PC-3 (cell line): ENCODE measurements at regions of chr20 and their contacts with region 1.

Region 1: GRCh38 chr20:7926767-7927166 is 13.5 kb downstream of the HAO1 start:
- DNase-seq: peak; percentile 67
- ATAC-seq: no peak; the same call in 1 of the 2 replicates
- H3K4me3 ChIP-seq: no peak overlapping the region
- H3K27ac ChIP-seq: peak overlapping the region; percentile 50
- H3K4me1 ChIP-seq: peaks cover 27% of the 10 kb centered on the region
- H3K27me3 ChIP-seq: no peaks in the 10 kb centered on the region
- CTCF ChIP-seq: peak; percentile 92

Region 2: GRCh38 chr20:6142348-6142993 is 1784.3 kb before region 1 on chr20:
- CTCF ChIA-PET with region 1: no interaction called
- POLR2A ChIA-PET with region 1: no interaction called
- intact Hi-C with region 1: loop called (anchors 5 kb)
- DNase-seq: peak; percentile 89
- ATAC-seq: peak; percentile 91
- H3K4me3 ChIP-seq: peak overlapping the region; percentile 15; the same call in 1 of the 2 replicates
- H3K27ac ChIP-seq: no peak overlapping the region
- H3K4me1 ChIP-seq: no peaks in the 10 kb centered on the region
- H3K27me3 ChIP-seq: peaks cover 31% of the 10 kb centered on the region; the same call in 1 of the 2 replicates
- CTCF ChIP-seq: peak; percentile 93

Region 3: DNA sequence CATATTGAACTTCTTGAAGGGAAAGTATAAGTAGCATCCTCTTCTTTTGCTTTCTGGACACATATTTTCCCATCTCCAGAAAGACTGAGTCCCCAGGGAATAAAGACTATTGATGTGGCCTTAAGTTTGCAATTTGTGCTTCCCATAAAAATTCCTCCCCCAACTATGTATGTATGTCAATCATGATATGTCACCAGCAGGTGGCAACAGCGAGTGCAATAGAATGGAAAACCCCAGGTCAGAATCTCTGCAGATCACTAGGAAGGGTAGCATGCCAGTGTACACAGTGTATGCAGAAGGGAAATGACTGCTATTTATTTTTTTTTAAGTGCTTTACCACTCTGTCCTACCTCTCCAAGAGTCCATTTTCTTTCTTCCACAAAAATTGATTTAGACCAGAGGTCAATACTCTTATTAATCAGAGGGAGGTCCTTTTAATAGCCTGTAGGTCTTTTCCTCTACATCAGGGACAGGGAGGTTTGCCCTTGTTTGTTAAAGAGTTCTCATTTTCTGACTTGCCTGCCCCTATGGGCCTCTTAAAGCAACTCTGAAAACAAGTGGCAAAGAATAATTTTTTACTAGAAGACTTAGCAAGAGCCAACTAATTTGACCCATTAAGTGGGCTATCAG is 1097.9 kb before region 1 on chr20:
- CTCF ChIA-PET with region 1: no interaction called
- POLR2A ChIA-PET with region 1: no interaction called
- intact Hi-C with region 1: loop called (anchors 2 kb)
- DNase-seq: peak; percentile 85
- ATAC-seq: peak; percentile 89
- H3K4me3 ChIP-seq: no peak overlapping the region
- H3K27ac ChIP-seq: no peak overlapping the region
- H3K4me1 ChIP-seq: peaks cover 5% of the 10 kb centered on the region; the same call in 1 of the 2 replicates
- H3K27me3 ChIP-seq: peaks cover 25% of the 10 kb centered on the region
- CTCF ChIP-seq: peak; percentile 83

Region 4: DNA sequence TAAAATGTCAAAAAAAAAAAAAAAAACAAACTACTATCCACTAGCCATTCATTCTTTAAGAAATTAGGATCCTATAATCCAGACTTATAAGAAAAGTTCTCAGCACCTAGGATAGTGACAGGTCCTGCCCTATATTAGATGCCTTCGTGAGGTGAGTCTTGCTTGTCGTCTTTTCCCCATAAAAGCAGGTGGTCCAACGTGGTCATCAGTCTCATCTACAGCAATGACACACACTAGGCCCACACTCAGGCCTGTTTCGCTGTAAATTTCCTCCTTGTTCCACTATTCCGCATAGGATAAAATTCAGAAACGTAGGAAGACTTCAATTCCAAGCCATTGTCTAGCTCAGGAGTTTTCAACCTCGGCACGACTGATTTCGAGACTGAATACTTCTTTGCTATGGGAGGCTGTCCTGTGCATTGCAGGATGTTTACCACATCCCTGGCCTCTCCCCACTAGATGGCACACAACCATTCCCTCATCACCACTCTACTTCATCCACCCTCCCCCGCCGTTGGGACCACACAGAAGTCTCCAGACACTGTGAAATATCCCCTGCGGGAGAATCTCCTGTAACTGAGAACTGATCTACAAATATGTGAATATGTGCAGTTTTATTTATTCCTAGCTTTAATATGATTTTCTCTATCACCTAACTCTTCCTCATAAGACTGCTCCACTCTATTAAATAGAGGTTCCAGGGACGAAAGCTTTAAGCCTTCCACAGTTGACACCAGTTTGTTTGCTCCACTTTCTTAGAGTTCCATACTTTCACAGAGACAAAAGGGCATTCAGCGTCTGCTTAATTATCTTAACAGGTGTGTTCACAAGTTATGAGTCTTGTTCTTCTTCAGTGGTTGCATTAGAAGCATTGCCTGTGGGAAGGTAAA is 812.9 kb before region 1 on chr20:
- CTCF ChIA-PET with region 1: no interaction called
- POLR2A ChIA-PET with region 1: no interaction called
- intact Hi-C with region 1: loop called (anchors 5 kb)
- DNase-seq: peak; percentile 59
- ATAC-seq: peak; percentile 85
- H3K4me3 ChIP-seq: no peak overlapping the region
- H3K27ac ChIP-seq: no peak overlapping the region
- H3K4me1 ChIP-seq: no peaks in the 10 kb centered on the region
- H3K27me3 ChIP-seq: peaks cover 40% of the 10 kb centered on the region
- CTCF ChIP-seq: peak; percentile 85